Activated CD4-positive, alpha-beta T cell treated with anti-CD3 and anti-CD28 coated beads, Interleukin-2, amount 10 ng/mL, durations not matched to agents 24 days and 14 days (primary cell): ENCODE measurements at regions of chr1 and their contacts with region 1.

Region 1: GRCh38 chr1:204363335-204364124 is 3.8 kb upstream of the PLEKHA6 start:
- DNase-seq: peak; percentile 91
- H3K4me3 Mint-ChIP-seq: peak overlapping the region; percentile 73
- H3K27ac Mint-ChIP-seq: peak overlapping the region; percentile 85
- H3K4me1 Mint-ChIP-seq: peaks cover 40% of the 10 kb centered on the region
- H3K27me3 Mint-ChIP-seq: peaks cover 5% of the 10 kb centered on the region

Region 2: GRCh38 chr1:204162231-204163074 is 201.1 kb before region 1 on chr1:
- intact Hi-C with region 1: loop called (anchors 1 kb)
- DNase-seq: peak; percentile 93
- H3K4me3 Mint-ChIP-seq: no peak overlapping the region
- H3K27ac Mint-ChIP-seq: no peak overlapping the region
- H3K4me1 Mint-ChIP-seq: no peaks in the 10 kb centered on the region
- H3K27me3 Mint-ChIP-seq: peaks cover 6% of the 10 kb centered on the region

Region 3: GRCh38 chr1:204213668-204214662 is 149.6 kb before region 1 on chr1 and contains the start of gene GOLT1A:
- intact Hi-C with region 1: loop called (anchors 1 kb)
- DNase-seq: peak; percentile 79
- H3K4me3 Mint-ChIP-seq: peak within 1 kb of the TSS; percentile 72
- H3K27ac Mint-ChIP-seq: peak within 1 kb of the TSS; percentile 12
- H3K4me1 Mint-ChIP-seq: peaks cover 4% of the 10 kb centered on the region
- H3K27me3 Mint-ChIP-seq: peaks cover 8% of the 10 kb centered on the region
- total RNA-seq, gene GOLT1A: not detected in 2 replicates

Region 4: DNA sequence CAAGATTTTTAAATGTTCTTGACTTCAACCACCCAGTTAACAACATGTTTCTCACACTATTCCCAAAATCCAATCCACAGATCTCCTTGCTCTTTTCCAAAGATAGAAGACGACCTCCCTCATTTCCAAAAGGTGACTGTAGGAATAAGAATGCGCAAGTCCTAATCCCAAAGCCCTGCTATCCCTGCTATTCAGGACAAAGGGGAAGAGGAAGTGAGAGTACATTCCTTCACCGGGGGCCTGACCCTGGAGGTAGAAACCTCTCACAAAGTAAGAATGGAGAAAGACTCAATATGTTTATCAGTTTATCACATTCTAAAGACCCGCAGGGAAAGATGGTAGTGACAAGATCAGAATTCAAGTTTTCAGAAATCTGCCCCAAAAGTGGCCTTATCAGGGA is 59.5 kb before region 1 on chr1:
- intact Hi-C with region 1: loop called (anchors 5 kb)
- DNase-seq: no peak
- H3K4me3 Mint-ChIP-seq: no peak overlapping the region
- H3K27ac Mint-ChIP-seq: no peak overlapping the region
- H3K4me1 Mint-ChIP-seq: no peaks in the 10 kb centered on the region
- H3K27me3 Mint-ChIP-seq: peaks cover 35% of the 10 kb centered on the region

Region 5: GRCh38 chr1:204384994-204385352 is 21.4 kb after region 1 on chr1:
- intact Hi-C with region 1: no loop called
- DNase-seq: no peak
- H3K4me3 Mint-ChIP-seq: no peak overlapping the region
- H3K27ac Mint-ChIP-seq: no peak overlapping the region
- H3K4me1 Mint-ChIP-seq: peaks cover 2% of the 10 kb centered on the region
- H3K27me3 Mint-ChIP-seq: peaks cover 12% of the 10 kb centered on the region

Region 6: GRCh38 chr1:204398217-204399081 is 34.9 kb after region 1 on chr1:
- intact Hi-C with region 1: loop called (anchors 1 kb)
- DNase-seq: peak; percentile 88
- H3K4me3 Mint-ChIP-seq: no peak overlapping the region
- H3K27ac Mint-ChIP-seq: peak overlapping the region; percentile 66
- H3K4me1 Mint-ChIP-seq: peaks cover 2% of the 10 kb centered on the region
- H3K27me3 Mint-ChIP-seq: no peaks in the 10 kb centered on the region

Region 7: DNA sequence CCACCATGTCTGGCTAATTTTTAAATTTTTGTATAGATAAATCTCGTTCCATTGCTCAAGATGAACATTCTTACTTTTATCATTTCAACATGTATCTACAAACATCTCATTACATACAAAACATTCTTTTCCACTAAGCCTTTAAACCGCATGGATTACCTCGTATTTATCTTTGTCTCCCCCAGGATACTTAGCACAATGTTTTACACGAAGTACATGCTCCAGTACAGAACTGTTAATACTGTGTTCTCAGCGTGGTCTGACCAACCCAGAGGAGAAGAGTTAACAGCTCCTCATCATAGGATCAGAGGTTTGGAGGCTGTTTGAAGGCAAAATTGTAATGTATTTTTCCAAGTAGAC is 123.7 kb after region 1 on chr1:
- intact Hi-C with region 1: no loop called
- DNase-seq: no peak
- H3K4me3 Mint-ChIP-seq: no peak overlapping the region
- H3K27ac Mint-ChIP-seq: no peak overlapping the region
- H3K4me1 Mint-ChIP-seq: peaks cover 26% of the 10 kb centered on the region
- H3K27me3 Mint-ChIP-seq: no peaks in the 10 kb centered on the region